B cell (primary cell): ENCODE measurements at regions of chr6 and their contacts with region 1.

Region 1: DNA sequence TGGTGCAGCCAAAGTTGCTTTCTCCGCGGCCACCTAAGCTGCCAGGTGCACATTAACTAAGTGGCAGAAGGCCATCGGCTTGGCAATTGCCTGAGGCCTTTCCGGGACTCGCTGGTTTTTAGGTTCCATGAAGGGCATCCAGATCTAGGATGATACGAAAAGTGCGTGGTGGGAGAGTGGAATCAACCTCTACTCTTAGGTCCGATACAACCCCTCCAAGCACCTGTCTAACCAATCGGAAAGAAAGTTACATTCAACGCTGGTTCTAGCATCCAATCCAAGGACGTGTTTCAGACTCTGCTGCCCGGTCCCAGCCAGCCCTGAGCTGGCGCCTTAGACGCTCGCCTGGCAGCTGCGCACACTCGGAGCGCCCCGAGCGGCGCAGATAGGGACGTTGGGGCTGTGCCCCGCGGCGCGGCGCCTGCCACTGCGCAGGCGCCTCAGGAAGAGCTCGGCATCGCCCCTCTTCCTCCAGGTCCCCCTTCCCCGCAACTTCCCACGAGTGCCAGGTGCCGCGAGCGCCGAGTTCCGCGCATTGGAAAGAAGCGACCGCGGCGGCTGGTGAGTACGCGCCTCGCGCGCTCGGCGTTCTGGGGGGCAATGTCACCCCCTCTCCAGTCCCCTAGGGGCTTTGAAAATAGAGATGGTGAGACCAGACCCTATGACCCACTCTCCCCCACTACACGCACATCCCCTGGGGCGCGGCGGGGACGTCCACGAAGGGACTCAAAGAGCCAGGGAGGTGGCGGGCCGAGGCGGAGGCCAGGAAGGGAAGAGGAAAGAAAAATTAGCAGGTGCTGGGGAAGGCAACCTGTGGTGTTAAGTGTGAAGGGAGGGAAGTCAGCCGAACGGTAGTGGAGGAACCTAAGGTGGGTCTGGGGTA is at the start of gene ENPP4:
- DNase-seq: peak; percentile 98
- ATAC-seq: peak; percentile 99
- H3K4me3 ChIP-seq: peak within 1 kb of the TSS; percentile 73 to 96 (median 80)
- H3K4me3 Mint-ChIP-seq: peak within 1 kb of the TSS; percentile 99
- H3K27ac ChIP-seq: peak within 1 kb of the TSS; percentile 72 to 78
- H3K27ac Mint-ChIP-seq: peak within 1 kb of the TSS; percentile 97
- H3K4me1 ChIP-seq: peaks cover 23 to 26% of the 10 kb centered on the region in 2 donors
- H3K4me1 Mint-ChIP-seq: peaks cover 45% of the 10 kb centered on the region
- H3K27me3 ChIP-seq: no peaks in the 10 kb centered on the region
- H3K27me3 Mint-ChIP-seq: no peaks in the 10 kb centered on the region
- CTCF ChIP-seq: no peak
- total RNA-seq, gene ENPP4: 10.0 and 10.1 TPM in 2 replicates

Region 2: GRCh38 chr6:45377554-45378333 is 752.1 kb before region 1 on chr6 and contains the start of gene SUPT3H:
- CTCF ChIA-PET with region 1: no interaction called
- POLR2A ChIA-PET with region 1: no interaction called
- intact Hi-C with region 1: loop called (anchors 5 kb)
- DNase-seq: peak; percentile 95
- ATAC-seq: peak; percentile 77
- H3K4me3 ChIP-seq: peak within 1 kb of the TSS; percentile 76 to 98 (median 93)
- H3K4me3 Mint-ChIP-seq: peak within 1 kb of the TSS; percentile 98
- H3K27ac ChIP-seq: peak within 1 kb of the TSS; percentile 97
- H3K27ac Mint-ChIP-seq: peak within 1 kb of the TSS; percentile 97
- H3K4me1 ChIP-seq: peaks cover 9 to 12% of the 10 kb centered on the region in 2 donors
- H3K4me1 Mint-ChIP-seq: peaks cover 28% of the 10 kb centered on the region
- H3K27me3 ChIP-seq: no peaks in the 10 kb centered on the region
- H3K27me3 Mint-ChIP-seq: no peaks in the 10 kb centered on the region
- CTCF ChIP-seq: no peak
- total RNA-seq, gene SUPT3H: 12.4 and 14.1 TPM in 2 replicates

Region 3: DNA sequence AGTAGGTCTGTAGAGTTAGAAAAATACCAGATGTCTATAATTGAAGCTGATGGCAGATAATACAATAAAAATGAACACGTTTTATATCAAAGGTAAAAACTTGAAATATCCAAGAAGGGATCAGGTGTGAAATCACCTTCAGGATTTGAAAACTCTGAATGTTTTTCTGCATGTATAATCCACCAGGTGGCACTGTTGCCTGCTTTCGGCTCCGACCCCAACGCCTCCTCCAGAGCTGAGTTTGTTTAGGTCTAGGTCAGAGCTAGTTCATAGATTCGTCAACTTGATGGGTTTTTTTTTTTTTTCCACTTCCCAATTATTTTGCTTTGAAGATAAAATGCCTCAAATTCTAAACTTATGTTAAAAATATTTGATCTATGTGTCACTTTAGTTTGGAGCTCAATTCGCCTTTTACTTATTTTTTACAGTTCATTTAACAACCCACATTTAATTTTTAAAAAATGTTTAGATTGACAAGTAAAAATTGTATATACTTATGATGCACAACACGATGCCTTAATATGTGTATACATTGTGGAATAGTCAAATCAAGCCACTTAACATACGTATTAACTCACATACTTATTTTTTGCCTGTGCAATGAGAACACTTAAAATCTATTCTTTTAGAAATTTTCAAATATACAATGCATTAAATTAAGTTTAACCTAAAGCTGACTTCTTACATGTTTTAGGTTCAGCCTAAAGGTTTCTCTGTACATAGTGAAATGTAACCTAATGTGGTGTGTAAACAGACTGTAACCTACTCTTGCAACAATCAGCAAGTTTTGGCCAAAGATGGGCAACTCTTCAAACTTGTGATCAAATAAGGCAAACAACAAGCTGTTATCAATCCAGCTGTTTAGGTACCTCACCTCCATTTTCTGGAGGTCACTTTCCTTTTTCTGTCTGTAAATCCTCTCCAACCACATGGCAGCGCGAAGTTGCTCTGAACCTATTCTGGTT is 39.5 kb before region 1 on chr6:
- CTCF ChIA-PET with region 1: interaction called, 19 read pairs
- POLR2A ChIA-PET with region 1: no interaction called
- intact Hi-C with region 1: loop called (anchors 2 kb)
- DNase-seq: peak; percentile 70
- ATAC-seq: peak; percentile 54
- H3K4me3 ChIP-seq: no peak overlapping the region
- H3K4me3 Mint-ChIP-seq: no peak overlapping the region
- H3K27ac ChIP-seq: no peak overlapping the region
- H3K27ac Mint-ChIP-seq: no peak overlapping the region
- H3K4me1 ChIP-seq: no peaks in the 10 kb centered on the region
- H3K4me1 Mint-ChIP-seq: no peaks in the 10 kb centered on the region
- H3K27me3 ChIP-seq: peaks cover 0 to 3% (median 1%) of the 10 kb centered on the region in 4 experiments
- H3K27me3 Mint-ChIP-seq: peaks cover 24% of the 10 kb centered on the region
- CTCF ChIP-seq: peak; percentile 93

Region 4: DNA sequence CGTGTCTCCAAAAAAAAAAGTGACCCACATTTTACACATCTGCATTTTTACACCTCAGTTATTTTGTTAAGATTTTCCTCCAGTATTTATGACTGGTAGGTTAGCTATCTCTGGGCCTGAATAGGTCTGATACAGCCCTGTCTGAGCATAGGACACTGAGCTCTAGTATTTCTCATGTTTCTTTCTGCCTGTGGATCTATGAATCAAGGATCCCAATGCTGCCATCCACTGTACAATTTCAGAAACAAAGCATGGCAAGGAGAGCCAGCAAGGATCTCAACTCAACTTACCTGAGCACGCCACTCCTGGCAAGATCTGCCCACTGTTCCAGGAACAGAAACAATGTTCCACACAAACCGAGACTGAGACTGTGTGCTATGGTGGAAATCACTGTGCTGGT is 77.3 kb after region 1 on chr6:
- CTCF ChIA-PET with region 1: no interaction called
- POLR2A ChIA-PET with region 1: no interaction called
- intact Hi-C with region 1: no loop called
- DNase-seq: no peak
- ATAC-seq: no peak
- H3K4me3 ChIP-seq: no peak overlapping the region
- H3K4me3 Mint-ChIP-seq: no peak overlapping the region
- H3K27ac ChIP-seq: no peak overlapping the region
- H3K27ac Mint-ChIP-seq: no peak overlapping the region
- H3K4me1 ChIP-seq: no peaks in the 10 kb centered on the region
- H3K4me1 Mint-ChIP-seq: no peaks in the 10 kb centered on the region
- H3K27me3 ChIP-seq: no peaks in the 10 kb centered on the region
- H3K27me3 Mint-ChIP-seq: no peaks in the 10 kb centered on the region
- CTCF ChIP-seq: no peak

Region 5: GRCh38 chr6:46376562-46377061 is 246.7 kb after region 1 on chr6:
- CTCF ChIA-PET with region 1: no interaction called
- POLR2A ChIA-PET with region 1: interaction called, 4 read pairs
- intact Hi-C with region 1: loop called (anchors 1 kb)
- DNase-seq: peak; percentile 73
- ATAC-seq: peak; percentile 89
- H3K4me3 ChIP-seq: peak overlapping the region in 2 of 5 experiments; percentile 28 to 36
- H3K4me3 Mint-ChIP-seq: peak overlapping the region; percentile 75
- H3K27ac ChIP-seq: peak overlapping the region; percentile 62 to 69
- H3K27ac Mint-ChIP-seq: peak overlapping the region; percentile 89
- H3K4me1 ChIP-seq: peaks cover 41 to 42% of the 10 kb centered on the region in 2 donors
- H3K4me1 Mint-ChIP-seq: peaks cover 75% of the 10 kb centered on the region
- H3K27me3 ChIP-seq: no peaks in the 10 kb centered on the region
- H3K27me3 Mint-ChIP-seq: no peaks in the 10 kb centered on the region
- CTCF ChIP-seq: no peak

Region 6: DNA sequence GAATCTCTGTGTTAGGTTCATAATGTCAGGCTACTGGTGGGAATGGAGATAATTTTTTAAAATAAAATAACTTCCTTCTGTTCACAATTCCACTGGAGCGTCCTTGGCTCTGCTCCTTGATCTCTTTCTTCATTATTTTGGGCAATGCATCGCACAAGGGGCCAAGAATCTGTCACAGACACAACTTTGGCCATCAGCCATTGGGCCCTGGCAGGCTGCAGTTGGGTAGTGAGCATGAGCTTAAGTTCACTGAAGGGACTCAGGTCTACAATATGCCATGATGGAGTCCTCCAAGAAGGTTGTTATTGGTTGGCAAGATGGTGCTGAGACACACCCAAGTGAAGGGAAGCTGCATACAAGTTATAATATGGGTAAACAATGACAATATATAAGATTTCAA is 482.8 kb after region 1 on chr6:
- CTCF ChIA-PET with region 1: no interaction called
- POLR2A ChIA-PET with region 1: no interaction called
- intact Hi-C with region 1: no loop called
- DNase-seq: no peak
- ATAC-seq: no peak
- H3K4me3 ChIP-seq: no peak overlapping the region
- H3K4me3 Mint-ChIP-seq: no peak overlapping the region
- H3K27ac ChIP-seq: no peak overlapping the region
- H3K27ac Mint-ChIP-seq: no peak overlapping the region
- H3K4me1 ChIP-seq: no peaks in the 10 kb centered on the region
- H3K4me1 Mint-ChIP-seq: no peaks in the 10 kb centered on the region
- H3K27me3 ChIP-seq: no peaks in the 10 kb centered on the region
- H3K27me3 Mint-ChIP-seq: peaks cover 14% of the 10 kb centered on the region
- CTCF ChIP-seq: no peak

Region 7: DNA sequence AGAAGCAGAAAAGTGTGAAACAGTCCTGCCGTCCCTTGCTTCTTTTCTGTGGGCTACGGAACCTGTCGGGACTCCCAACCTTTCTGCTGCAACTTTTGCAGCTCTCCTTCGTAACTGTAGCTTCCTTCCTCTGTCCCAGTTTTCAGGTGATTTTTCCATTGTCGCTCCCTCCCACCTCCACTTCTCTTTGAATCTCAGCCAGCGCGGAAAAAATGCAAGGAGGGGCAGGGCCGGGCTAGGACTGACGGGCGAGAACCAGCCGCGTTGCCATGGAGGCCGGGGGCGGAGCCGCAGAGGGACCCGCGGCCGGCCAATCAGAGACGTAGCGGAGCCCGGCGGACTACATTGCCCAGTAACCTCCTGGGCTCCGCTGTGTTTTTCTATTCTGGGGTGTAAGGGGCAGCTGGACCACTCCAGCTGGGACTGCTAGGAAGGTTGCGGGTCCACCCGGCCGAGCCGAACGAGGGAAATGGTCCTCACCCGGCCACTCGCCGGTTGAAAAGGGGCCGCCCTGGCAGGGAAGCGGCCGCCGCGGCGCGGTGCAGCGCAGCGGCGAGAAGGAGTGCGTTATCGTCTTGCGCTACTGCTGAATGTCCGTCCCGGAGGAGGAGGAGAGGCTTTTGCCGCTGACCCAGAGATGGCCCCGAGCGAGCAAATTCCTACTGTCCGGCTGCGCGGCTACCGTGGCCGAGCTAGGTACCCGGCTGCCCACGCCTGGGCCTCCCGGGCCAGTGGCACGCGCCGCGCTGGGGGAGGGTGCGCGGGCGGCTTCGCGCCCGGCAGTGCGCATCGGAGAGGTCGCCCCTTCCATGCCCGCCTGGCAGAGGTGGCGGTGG is 523.0 kb after region 1 on chr6 and contains the starts of genes CYP39A1 and SLC25A27:
- CTCF ChIA-PET with region 1: no interaction called
- POLR2A ChIA-PET with region 1: no interaction called
- intact Hi-C with region 1: loop called (anchors 10 kb)
- DNase-seq: peak; percentile 84
- ATAC-seq: peak; percentile 100
- H3K4me3 ChIP-seq: peak within 1 kb of the TSS; percentile 55 to 82 (median 77)
- H3K4me3 Mint-ChIP-seq: peak within 1 kb of the TSS; percentile 95
- H3K27ac ChIP-seq: no peak within 1 kb of the TSS
- H3K27ac Mint-ChIP-seq: peak within 1 kb of the TSS; percentile 22
- H3K4me1 ChIP-seq: peaks cover 11 to 12% of the 10 kb centered on the region in 2 donors
- H3K4me1 Mint-ChIP-seq: peaks cover 16% of the 10 kb centered on the region
- H3K27me3 ChIP-seq: peaks cover 0 to 23% (median 13%) of the 10 kb centered on the region in 4 experiments
- H3K27me3 Mint-ChIP-seq: peaks cover 54% of the 10 kb centered on the region
- CTCF ChIP-seq: no peak
- total RNA-seq, gene CYP39A1: not detected in 2 replicates
- total RNA-seq, gene SLC25A27: 1.9 and 3.8 TPM in 2 replicates